B cell (primary cell): ENCODE measurements at regions of chr6 and their contacts with region 1.

Region 1: DNA sequence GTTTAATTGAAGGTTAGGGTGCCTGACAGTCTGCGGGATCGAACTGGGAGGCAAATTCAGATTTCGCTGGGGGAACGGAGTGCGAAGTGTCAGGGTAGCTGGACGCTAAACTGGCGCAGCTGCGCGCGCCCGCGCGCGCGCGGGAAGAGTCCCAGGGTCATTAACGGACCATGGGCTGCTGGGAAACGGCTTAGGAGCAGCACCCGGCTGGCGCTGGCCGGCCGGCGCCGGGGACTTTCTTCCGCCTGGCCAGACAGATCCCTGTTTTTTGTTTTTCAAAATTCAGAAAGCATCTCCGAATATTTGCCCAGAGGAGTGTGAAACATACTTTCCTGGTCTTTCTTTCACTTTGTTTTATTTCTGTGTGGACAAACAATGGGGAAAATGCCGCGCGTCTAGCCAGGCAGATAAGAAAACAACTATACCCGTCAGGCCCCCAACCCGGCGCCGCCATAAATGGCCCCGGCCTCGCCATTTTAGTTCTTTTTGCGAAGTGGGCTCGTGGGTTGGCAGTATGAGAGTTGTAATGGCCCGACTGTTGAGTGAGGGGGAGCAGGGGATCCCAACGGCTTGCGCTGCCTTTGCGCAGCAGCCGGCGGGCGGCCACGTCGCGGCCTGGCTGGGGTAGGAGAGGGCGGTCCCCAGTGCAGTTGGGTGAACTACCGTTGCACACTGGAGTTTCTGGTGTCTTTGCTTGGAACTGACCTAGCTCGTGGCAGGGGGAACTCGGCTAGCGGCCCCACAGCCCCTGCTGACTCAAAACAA is 7.1 kb downstream of the HSPA1B start:
- DNase-seq: peak; percentile 91
- ATAC-seq: peak; percentile 61
- H3K4me3 ChIP-seq: peak overlapping the region; percentile 85 to 95 (median 90)
- H3K4me3 Mint-ChIP-seq: peak overlapping the region; percentile 87
- H3K27ac ChIP-seq: peak overlapping the region; percentile 97 to 98
- H3K27ac Mint-ChIP-seq: peak overlapping the region; percentile 92
- H3K4me1 ChIP-seq: peaks cover 44 to 75% of the 10 kb centered on the region in 2 donors
- H3K4me1 Mint-ChIP-seq: peaks cover 56% of the 10 kb centered on the region
- H3K27me3 ChIP-seq: no peaks in the 10 kb centered on the region
- H3K27me3 Mint-ChIP-seq: no peaks in the 10 kb centered on the region
- CTCF ChIP-seq: no peak

Region 2: GRCh38 chr6:31493875-31494694 is 340.5 kb before region 1 on chr6:
- CTCF ChIA-PET with region 1: interaction called, 4 read pairs
- POLR2A ChIA-PET with region 1: interaction called, 12 read pairs
- intact Hi-C with region 1: loop called (anchors 2 kb)
- DNase-seq: peak; percentile 89
- ATAC-seq: peak; percentile 47
- H3K4me3 ChIP-seq: peak overlapping the region; percentile 76 to 91 (median 85)
- H3K4me3 Mint-ChIP-seq: peak overlapping the region; percentile 83
- H3K27ac ChIP-seq: peak overlapping the region; percentile 74 to 80
- H3K27ac Mint-ChIP-seq: peak overlapping the region; percentile 89
- H3K4me1 ChIP-seq: peaks cover 42 to 54% of the 10 kb centered on the region in 2 donors
- H3K4me1 Mint-ChIP-seq: peaks cover 46% of the 10 kb centered on the region
- H3K27me3 ChIP-seq: no peaks in the 10 kb centered on the region
- H3K27me3 Mint-ChIP-seq: no peaks in the 10 kb centered on the region
- CTCF ChIP-seq: peak; percentile 88

Region 3: GRCh38 chr6:31729515-31729978 is 105.1 kb before region 1 on chr6:
- CTCF ChIA-PET with region 1: interaction called, 75 read pairs
- POLR2A ChIA-PET with region 1: interaction called, 36 read pairs
- intact Hi-C with region 1: loop called (anchors 1 kb)
- DNase-seq: peak; percentile 90
- ATAC-seq: peak; percentile 48
- H3K4me3 ChIP-seq: peak overlapping the region; percentile 67 to 94 (median 85)
- H3K4me3 Mint-ChIP-seq: peak overlapping the region; percentile 99
- H3K27ac ChIP-seq: peak overlapping the region; percentile 78 to 82
- H3K27ac Mint-ChIP-seq: peak overlapping the region; percentile 97
- H3K4me1 ChIP-seq: peaks cover 49 to 58% of the 10 kb centered on the region in 2 donors
- H3K4me1 Mint-ChIP-seq: peaks cover 72% of the 10 kb centered on the region
- H3K27me3 ChIP-seq: no peaks in the 10 kb centered on the region
- H3K27me3 Mint-ChIP-seq: no peaks in the 10 kb centered on the region
- CTCF ChIP-seq: peak; percentile 89

Region 4: DNA sequence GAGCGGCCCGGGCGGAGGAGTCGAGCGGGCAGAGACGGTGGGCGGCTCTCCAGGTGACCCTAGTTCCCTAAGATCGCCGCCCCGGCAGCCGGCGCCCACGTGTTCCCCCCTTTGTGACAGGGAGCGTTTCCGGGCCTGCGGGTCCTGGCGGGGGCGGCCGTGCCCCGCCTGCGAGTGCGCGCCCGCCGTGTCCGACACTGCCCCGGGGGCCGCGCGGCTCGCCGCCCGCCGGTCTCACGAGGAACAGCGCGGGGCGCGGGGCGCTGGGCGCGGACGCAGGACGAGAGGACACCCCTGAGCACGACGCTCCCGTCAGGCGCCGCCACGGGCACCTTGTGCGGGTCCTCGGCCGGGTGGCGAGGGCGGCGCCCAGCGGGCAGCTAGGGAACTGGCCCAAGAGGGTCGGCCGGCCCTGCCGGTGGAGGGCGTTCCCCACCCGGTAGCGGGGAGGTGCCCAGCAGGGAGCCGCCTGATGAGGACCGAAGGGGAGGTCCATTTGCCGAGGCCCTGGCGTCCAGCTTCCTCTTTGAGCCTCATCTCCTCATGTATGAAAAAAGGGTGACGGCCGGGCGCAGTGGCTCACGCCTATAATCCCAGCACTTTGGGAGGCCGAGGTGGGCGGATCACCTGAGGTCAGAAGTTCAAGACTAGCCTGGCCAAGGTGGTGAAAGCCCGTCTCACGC is 38.9 kb before region 1 on chr6 and contains the start of gene VARS1:
- CTCF ChIA-PET with region 1: interaction called, 6 read pairs
- POLR2A ChIA-PET with region 1: interaction called, 15 read pairs
- intact Hi-C with region 1: loop called (anchors 2 kb)
- DNase-seq: peak; percentile 96
- ATAC-seq: peak; percentile 91
- H3K4me3 ChIP-seq: peak within 1 kb of the TSS; percentile 72 to 96 (median 95)
- H3K4me3 Mint-ChIP-seq: peak within 1 kb of the TSS; percentile 97
- H3K27ac ChIP-seq: peak within 1 kb of the TSS; percentile 75 to 87
- H3K27ac Mint-ChIP-seq: peak within 1 kb of the TSS; percentile 99
- H3K4me1 ChIP-seq: peaks cover 45 to 59% of the 10 kb centered on the region in 2 donors
- H3K4me1 Mint-ChIP-seq: peaks cover 54% of the 10 kb centered on the region
- H3K27me3 ChIP-seq: no peaks in the 10 kb centered on the region
- H3K27me3 Mint-ChIP-seq: no peaks in the 10 kb centered on the region
- CTCF ChIP-seq: peak; percentile 79
- total RNA-seq, gene VARS1: 47.4 and 52.3 TPM in 2 replicates

Region 5: DNA sequence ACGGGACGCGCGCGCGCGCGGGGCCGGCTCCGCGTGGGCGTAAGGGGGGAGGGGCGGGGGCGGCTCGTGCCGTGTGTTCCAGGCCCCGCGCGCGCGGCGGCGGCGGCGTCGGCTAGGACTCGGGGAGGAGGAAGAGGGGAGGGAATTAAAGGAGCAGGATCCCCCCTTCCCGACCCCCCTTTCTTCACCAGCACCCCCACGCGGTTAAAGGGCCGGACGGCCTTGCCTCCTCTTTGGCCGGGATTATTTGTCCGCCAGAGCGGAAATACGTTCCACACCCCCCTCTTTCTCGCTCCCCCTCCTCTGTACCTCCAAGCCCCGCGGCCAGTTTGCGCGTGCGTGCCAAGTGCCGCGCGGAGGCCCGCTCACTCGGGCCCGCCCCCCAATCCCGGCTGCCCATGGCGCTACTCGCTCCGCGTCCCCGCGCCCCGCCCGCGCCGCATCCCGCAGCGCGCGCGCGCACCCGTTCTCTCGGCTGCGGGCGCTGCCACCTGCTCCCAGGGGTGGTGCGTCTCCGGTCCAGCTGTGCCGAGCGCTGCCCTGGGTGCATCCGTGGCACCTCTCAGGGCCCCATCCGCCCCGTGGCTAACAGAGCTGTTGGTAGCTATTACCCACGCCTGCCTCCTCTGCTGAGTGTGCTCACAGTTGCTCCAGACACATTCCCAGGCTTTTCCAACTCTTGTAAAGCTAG is 67.5 kb after region 1 on chr6 and contains the start of gene ZBTB12:
- CTCF ChIA-PET with region 1: interaction called, 5 read pairs
- POLR2A ChIA-PET with region 1: interaction called, 6 read pairs
- intact Hi-C with region 1: loop called (anchors 1 kb)
- DNase-seq: peak; percentile 93
- ATAC-seq: peak; percentile 64
- H3K4me3 ChIP-seq: peak within 1 kb of the TSS; percentile 27 to 82 (median 77)
- H3K4me3 Mint-ChIP-seq: peak within 1 kb of the TSS; percentile 94
- H3K27ac ChIP-seq: peak within 1 kb of the TSS; percentile 76 to 79
- H3K27ac Mint-ChIP-seq: peak within 1 kb of the TSS; percentile 93
- H3K4me1 ChIP-seq: peaks cover 13 to 23% of the 10 kb centered on the region in 2 donors
- H3K4me1 Mint-ChIP-seq: peaks cover 32% of the 10 kb centered on the region
- H3K27me3 ChIP-seq: no peaks in the 10 kb centered on the region
- H3K27me3 Mint-ChIP-seq: no peaks in the 10 kb centered on the region
- CTCF ChIP-seq: no peak
- total RNA-seq, gene ZBTB12: 8.1 and 8.9 TPM in 2 replicates